ENCODE measurements at regions of chr11 and their contacts with region 1.

Region 1: GRCh38 chr11:75547580-75548058 is 14.4 kb upstream of the SERPINH1 start:
- DNase-seq: peak in 3 of 14 experiments; percentile 46 to 59 (median 54)
- ATAC-seq: no peak
- H3K4me3 ChIP-seq: no peak overlapping the region
- H3K4me3 Mint-ChIP-seq: no peak overlapping the region
- H3K27ac ChIP-seq: no peak overlapping the region
- H3K27ac Mint-ChIP-seq: no peak overlapping the region
- H3K4me1 ChIP-seq: no peaks in the 10 kb centered on the region
- H3K4me1 Mint-ChIP-seq: no peaks in the 10 kb centered on the region
- H3K27me3 ChIP-seq: peaks cover 0 to 7% of the 10 kb centered on the region in 2 experiments
- H3K27me3 Mint-ChIP-seq: peaks cover 5% of the 10 kb centered on the region
- CTCF ChIP-seq: peak; percentile 76

Region 2: GRCh38 chr11:75577207-75577606 is 29.6 kb after region 1 on chr11:
- CTCF ChIA-PET with region 1: no interaction called
- POLR2A ChIA-PET with region 1: no interaction called
- intact Hi-C with region 1: loop called in 1 of 2 experiments (anchors 1 kb)
- DNase-seq: peak; percentile 50 to 78 (median 62)
- ATAC-seq: peak; percentile 54
- H3K4me3 ChIP-seq: no peak overlapping the region
- H3K4me3 Mint-ChIP-seq: no peak overlapping the region
- H3K27ac ChIP-seq: no peak overlapping the region
- H3K27ac Mint-ChIP-seq: no peak overlapping the region
- H3K4me1 ChIP-seq: peaks cover 3% of the 10 kb centered on the region
- H3K4me1 Mint-ChIP-seq: peaks cover 1% of the 10 kb centered on the region
- H3K27me3 ChIP-seq: no peaks in the 10 kb centered on the region
- H3K27me3 Mint-ChIP-seq: no peaks in the 10 kb centered on the region
- CTCF ChIP-seq: peak; percentile 70

Region 3: DNA sequence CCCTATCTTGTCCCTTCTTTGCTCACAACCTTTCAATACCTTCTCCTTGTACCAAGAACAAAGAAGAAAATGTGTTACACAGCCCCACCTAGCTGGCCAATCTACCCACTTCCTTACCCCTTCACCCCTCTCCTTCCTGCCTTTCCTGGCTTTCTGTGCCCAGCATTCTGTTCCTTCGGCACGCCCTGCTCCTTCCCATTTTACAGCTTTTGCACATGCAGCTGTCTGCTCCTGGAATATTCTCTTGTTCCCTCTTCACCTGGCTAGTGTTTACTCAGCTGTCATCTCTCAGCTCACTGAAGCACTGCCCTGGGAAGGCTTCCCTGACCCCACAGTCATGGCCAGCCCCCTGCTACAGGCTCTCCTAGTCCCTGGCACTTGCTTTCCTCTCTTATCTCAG is 45.1 kb after region 1 on chr11:
- CTCF ChIA-PET with region 1: no interaction called
- POLR2A ChIA-PET with region 1: no interaction called
- intact Hi-C with region 1: loop called in 1 of 2 experiments (anchors 5 kb)
- DNase-seq: peak in 1 of 14 experiments; percentile 13
- ATAC-seq: no peak
- H3K4me3 ChIP-seq: no peak overlapping the region
- H3K4me3 Mint-ChIP-seq: no peak overlapping the region
- H3K27ac ChIP-seq: no peak overlapping the region
- H3K27ac Mint-ChIP-seq: no peak overlapping the region
- H3K4me1 ChIP-seq: peaks cover 11% of the 10 kb centered on the region
- H3K4me1 Mint-ChIP-seq: peaks cover 11% of the 10 kb centered on the region
- H3K27me3 ChIP-seq: no peaks in the 10 kb centered on the region
- H3K27me3 Mint-ChIP-seq: no peaks in the 10 kb centered on the region
- CTCF ChIP-seq: no peak

Region 4: DNA sequence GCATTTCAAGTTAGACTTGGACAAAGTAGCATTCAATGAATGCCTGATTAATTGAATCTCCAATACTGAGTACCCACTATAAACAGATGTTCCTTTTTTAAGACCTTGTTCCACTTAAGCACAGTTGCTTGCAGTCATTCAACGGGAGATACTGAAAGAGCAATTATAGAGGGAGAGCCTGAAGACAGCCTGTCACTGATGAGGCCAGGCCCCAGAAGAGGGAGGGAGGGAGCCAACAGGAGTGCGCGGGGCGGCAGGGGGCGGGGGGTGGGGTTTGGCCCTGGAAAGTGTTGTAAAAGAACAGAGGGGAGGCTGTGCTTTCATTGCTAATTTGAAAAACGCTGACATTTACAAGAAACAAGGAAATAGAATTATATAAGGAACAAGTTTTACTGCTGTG is 68.1 kb after region 1 on chr11:
- CTCF ChIA-PET with region 1: no interaction called
- POLR2A ChIA-PET with region 1: no interaction called
- intact Hi-C with region 1: no loop called
- DNase-seq: no peak
- ATAC-seq: no peak
- H3K4me3 ChIP-seq: no peak overlapping the region
- H3K4me3 Mint-ChIP-seq: no peak overlapping the region
- H3K27ac ChIP-seq: no peak overlapping the region
- H3K27ac Mint-ChIP-seq: no peak overlapping the region
- H3K4me1 ChIP-seq: no peaks in the 10 kb centered on the region
- H3K4me1 Mint-ChIP-seq: no peaks in the 10 kb centered on the region
- H3K27me3 ChIP-seq: no peaks in the 10 kb centered on the region
- H3K27me3 Mint-ChIP-seq: peaks cover 7% of the 10 kb centered on the region
- CTCF ChIP-seq: no peak